Dorsolateral prefrontal cortex (tissue), 120 donors: ENCODE measurements at regions of chr3 and their contacts with region 1.

Region 1: DNA sequence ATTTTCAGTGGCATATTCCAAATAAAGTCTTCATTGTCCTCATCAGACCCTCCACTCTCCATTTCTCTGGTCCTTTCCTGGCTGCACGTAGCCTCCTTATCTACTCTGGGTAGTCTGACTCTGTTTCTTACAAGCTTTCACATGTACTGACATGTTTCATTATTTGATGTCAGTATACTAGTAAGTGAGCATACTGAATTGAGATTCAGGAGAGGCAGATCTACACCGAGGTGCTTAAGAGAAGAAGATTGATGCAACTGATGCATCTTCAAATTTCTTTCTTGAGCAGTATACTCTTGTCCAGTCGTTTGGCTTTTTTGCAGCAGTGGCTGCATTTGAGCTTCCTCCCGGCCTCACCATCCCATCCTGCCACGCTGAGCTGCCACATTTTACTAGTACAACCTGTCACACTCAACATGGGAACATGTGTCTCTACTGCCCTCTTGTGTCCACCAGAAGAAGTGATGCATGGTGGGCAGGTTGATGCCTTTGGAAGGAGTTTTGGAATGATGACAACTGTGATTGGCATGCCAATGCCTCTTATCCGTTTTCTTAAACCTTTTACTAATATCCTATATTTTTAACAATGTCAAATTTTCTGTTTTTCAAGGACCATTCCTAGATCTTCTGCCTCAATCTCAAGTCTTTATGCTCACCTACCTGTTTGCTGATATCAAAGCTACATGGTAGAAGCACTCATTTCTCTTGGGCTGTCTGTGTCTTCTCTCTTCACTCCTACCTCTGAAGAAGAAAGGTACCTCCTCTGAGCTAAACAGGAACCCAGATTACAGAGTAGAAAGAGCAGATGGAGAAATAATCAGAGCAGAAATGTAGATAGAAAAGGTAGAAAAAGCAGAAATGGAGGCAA is 38.7 kb downstream of the GUCA1C start:
- DNase-seq: peak in 8 of 10 donors; percentile 12 to 58 (median 44)
- H3K4me3 ChIP-seq: no peak overlapping the region
- H3K27ac ChIP-seq: no peak overlapping the region
- H3K27me3 ChIP-seq: peaks cover 0 to 6% (median 0%) of the 10 kb centered on the region in 45 donors
- CTCF ChIP-seq: peak; percentile 62 to 93 (median 85)

Region 2: DNA sequence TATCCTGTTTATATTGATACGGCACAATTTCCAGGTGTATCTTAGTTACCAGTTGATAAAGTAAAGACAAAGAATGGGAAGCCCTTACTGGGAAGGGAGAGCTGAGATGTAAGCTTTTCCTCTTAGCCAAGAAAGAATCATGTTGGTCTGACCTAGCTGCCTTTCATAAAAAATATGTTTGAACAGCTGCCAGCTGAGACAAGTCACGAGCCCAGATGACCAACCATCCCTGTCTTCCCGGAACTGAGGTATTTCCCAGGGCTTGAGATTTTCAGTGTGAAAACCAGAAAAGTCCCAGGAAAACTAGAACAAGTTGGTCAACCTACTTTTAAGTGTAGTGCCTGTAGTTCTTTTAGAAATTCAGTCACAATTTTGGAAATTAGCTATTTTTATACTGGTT is 401.0 kb before region 1 on chr3:
- intact Hi-C with region 1: no loop called
- DNase-seq: no peak
- H3K4me3 ChIP-seq: no peak overlapping the region
- H3K27ac ChIP-seq: no peak overlapping the region
- H3K27me3 ChIP-seq: no peaks in the 10 kb centered on the region
- CTCF ChIP-seq: no peak

Region 3: DNA sequence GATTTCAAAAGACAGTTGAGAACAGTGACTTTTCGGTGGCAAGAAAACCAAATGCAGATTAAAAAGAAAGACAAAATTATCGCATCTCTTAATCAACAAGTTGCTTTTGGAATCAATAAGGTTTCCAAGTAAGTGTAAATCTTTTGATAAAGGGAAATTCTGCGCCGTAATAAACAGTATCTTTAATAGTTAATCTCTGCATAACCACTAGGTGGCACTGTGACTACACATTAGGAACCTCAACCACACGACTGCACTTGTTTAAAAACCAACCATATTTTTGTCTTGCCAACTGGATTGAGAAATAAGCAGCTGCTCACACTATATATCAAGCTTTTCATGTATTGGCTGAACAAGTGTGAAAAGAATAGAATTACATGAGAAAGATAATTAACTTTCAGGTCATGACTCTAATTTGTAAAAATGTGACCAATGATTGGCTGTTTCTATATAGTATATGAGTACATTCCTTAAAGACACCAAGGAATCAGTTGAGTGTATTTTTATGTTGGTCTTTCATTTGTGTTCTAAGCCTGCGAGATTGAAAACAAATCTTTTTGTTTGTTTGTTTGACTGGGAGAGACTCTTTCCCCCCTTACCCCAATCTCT is 252.8 kb before region 1 on chr3:
- intact Hi-C with region 1: loop called (anchors 2 to 5 kb)
- DNase-seq: peak in 1 of 10 donors; percentile 7
- H3K4me3 ChIP-seq: peak overlapping the region in 4 of 59 donors; percentile 4 to 24 (median 8)
- H3K27ac ChIP-seq: no peak overlapping the region
- H3K27me3 ChIP-seq: no peaks in the 10 kb centered on the region
- CTCF ChIP-seq: peak; percentile 62 to 96 (median 86)

Region 4: DNA sequence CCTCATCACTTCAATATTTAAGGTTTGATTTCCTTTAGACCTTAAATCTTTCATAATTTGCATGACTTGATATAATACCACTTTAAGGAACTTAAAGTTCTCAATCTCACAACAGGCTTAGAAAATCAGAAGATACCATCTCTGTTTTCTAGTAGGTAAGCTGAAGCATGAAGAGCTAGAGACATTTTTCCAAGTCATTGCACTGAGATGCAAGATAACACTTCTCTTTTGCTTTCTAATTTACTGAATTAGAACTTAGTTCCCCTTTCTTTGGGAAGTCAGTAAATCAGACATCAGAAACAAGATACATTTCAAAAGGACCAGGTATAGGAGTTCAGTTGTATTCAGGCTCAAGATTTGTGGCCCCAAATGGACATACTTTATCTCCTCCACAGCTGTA is 245.8 kb before region 1 on chr3:
- intact Hi-C with region 1: loop called in 1 of 2 experiments (anchors 5 kb)
- DNase-seq: no peak
- H3K4me3 ChIP-seq: no peak overlapping the region
- H3K27ac ChIP-seq: no peak overlapping the region
- H3K27me3 ChIP-seq: no peaks in the 10 kb centered on the region
- CTCF ChIP-seq: no peak

Region 5: DNA sequence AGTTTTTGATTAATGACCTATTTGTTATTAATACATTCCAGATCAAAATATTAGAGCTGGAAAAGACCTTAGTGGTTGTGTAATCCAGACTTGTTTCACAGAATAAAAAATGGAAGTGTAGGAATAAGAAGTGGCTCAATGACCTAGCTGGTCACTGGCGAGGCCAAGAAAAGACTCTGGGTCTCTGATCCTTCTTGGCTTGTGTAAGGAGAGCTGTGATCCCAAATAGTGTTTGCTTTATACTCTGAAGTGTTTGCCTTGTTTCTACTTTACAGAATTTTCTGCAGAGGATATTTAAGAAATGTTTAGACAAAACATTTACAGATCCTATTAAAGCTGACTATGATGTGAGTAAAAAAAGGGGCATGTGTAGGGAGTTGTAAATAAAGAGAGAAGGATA is 228.6 kb after region 1 on chr3:
- intact Hi-C with region 1: no loop called
- DNase-seq: no peak
- H3K4me3 ChIP-seq: no peak overlapping the region
- H3K27ac ChIP-seq: no peak overlapping the region
- H3K27me3 ChIP-seq: peaks cover 0 to 6% (median 0%) of the 10 kb centered on the region in 45 donors
- CTCF ChIP-seq: no peak